ENCODE measurements at regions of chr11 and their contacts with region 1.

Region 1: DNA sequence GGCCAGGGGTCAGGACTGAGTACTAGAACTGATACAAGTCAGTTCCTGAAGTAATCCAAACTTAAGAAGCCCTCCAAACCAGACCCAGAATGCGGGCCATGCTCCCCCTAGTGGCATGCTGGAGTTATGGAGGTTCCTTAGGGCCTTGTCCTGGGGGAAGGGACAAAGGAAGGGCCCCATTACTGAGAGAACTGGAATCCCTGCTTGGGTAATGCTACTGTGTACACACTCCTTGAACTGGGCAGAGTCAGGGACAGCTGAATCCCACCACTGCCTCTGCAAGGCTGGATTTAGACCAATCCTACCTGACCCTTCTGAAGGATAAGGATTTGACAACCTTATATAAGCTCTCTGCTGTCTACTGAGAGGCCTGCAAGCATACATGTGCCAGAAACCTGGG is 97.3 kb upstream of the AKIP1 start:
- DNase-seq: peak; percentile 69 to 84 (median 74)
- ATAC-seq: peak in 3 of 4 donors; percentile 41 to 64 (median 55)
- H3K4me3 ChIP-seq: no peak overlapping the region
- H3K27ac ChIP-seq: peak overlapping the region in 8 of 12 donors; percentile 4 to 89 (median 37)
- H3K4me1 ChIP-seq: peaks cover 0 to 48% (median 26%) of the 10 kb centered on the region in 12 donors
- H3K27me3 ChIP-seq: no peaks in the 10 kb centered on the region
- CTCF ChIP-seq: peak; percentile 83 to 93 (median 85)
- POLR2A ChIP-seq: no peak

Region 2: DNA sequence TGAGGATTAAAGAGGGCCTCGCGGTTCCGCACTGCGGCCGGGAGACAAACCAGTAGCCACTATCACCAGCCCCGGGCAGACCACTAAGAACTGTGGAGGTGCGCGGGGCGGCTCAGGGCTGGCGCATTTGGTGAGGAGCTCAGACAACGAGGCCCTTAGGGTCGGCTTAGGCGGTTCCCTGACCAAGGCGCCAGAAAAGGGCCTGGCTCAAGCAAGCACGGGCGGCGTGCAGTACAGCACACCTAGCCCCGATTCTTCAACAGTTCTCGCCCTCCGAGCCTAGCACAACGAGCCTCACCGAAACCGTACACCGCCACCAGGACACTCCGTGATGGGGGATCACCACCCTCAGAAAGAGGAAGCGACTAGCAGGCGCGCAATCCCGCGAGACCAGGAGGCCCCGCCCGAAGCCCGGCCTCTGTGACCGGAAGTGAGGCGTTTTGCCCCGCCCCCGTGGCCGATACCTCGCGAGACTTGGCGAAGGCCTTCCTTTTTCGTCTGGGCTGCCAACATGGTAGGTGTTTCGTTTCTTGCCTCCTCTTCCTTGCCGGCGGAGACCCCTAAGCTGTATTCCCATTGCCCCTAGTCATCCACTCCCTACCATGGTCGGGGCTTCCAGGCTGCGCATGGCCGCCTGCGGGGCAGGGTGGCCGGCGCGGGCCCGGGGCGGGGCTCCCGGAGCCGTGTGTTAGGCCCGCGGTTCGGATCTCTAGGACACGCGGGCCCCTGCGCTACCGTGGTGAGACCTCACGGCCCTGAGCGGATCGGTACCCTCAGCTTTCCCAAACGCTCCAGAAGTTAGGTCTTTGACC is 131.1 kb before region 1 on chr11 and contains the starts of genes RPL27A and TRIM66:
- intact Hi-C with region 1: loop called in 7 of 10 experiments (anchors 2 to 5 kb)
- DNase-seq: peak; percentile 99
- ATAC-seq: peak; percentile 97 to 99 (median 98)
- H3K4me3 ChIP-seq: peak within 1 kb of the TSS; percentile 58 to 100 (median 90)
- H3K27ac ChIP-seq: peak within 1 kb of the TSS; percentile 91 to 98 (median 96)
- H3K4me1 ChIP-seq: peaks cover 0 to 34% (median 22%) of the 10 kb centered on the region in 12 donors
- H3K27me3 ChIP-seq: no peaks in the 10 kb centered on the region
- CTCF ChIP-seq: peak in 6 of 12 donors; percentile 7 to 26 (median 13)
- POLR2A ChIP-seq: peak; percentile 51 to 97
- total RNA-seq, gene RPL27A: 299 to 597 (median 438) TPM
- total RNA-seq, gene TRIM66: 0.71 to 10.1 (median 4.1) TPM

Region 3: DNA sequence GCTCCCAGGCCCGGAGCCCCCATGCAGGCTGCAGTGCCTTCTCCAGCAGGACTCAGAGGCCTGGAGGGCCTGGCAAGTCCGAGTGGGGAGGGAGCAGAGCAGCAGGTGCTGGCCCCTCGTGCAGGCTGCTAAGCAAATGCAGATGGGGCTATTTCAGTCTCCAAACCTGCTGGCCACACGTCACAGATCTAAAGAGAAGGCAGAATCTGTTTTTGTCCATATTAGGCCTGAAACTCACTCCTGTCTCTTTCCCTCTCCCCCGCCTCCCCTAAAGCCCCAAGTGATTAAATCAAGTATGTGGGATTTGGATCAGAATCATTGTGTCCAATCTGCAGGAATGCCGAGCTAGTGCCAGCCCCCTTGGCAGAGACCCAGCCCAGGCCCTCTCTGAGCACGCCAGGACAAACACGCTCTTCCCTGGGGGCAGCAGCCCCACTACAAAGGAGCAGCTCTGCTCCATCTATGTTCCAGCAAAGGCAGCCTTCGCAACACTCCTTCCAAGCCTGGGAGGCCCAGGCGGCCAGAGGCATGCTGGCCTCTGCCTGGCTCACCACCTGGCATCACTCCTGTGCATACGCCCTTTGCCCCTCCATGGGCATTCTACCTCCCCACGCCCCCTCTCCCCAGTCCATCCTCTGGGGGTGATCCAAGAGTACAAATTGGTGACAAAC is 104.5 kb before region 1 on chr11:
- intact Hi-C with region 1: loop called in 3 of 10 experiments (anchors 5 to 10 kb)
- DNase-seq: peak; percentile 82 to 92 (median 91)
- ATAC-seq: peak; percentile 46 to 80 (median 70)
- H3K4me3 ChIP-seq: no peak overlapping the region
- H3K27ac ChIP-seq: peak overlapping the region; percentile 61 to 95 (median 79)
- H3K4me1 ChIP-seq: peaks cover 14 to 45% (median 35%) of the 10 kb centered on the region in 12 donors
- H3K27me3 ChIP-seq: no peaks in the 10 kb centered on the region
- CTCF ChIP-seq: no peak
- POLR2A ChIP-seq: no peak

Region 4: DNA sequence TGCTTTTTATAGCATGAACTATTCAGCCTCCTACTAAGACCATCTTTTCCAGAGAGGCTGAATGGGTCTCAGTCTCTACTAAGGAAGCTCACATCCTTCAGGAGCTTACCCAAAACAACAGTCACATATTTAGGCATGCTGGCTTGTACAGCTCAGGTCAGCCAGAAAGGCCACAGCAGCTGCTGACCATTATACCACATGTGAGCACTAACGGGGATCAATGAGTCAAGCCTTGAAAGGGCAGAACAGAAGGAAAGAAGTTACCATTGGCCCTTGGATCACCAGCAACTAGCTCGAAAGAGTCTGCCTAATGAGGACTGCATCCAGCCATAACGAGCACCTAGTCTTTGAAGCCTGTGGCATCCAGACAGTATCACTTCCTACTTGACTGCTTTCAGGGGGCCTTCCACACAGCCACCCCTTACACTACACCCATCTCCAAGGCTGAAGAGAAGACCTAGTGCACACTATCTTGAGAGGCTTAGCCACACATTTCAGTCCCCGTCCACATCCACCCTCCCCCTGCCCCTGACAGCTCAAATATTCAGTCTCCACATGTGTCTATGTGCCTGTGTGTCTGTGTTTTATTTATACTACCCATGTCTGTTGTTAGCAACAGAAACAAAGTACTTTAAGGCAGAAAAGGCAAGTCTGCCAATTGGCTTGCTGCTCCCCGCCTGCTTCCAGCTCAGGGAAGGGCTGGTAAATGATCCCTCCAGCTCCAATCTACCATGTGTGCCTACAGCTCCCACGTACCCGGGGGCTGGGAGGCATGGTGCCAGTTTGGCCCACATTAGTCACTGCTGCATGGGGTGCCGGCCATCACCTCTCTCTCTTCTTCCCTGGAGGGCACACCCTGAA is 35.5 kb before region 1 on chr11:
- intact Hi-C with region 1: loop called in 2 of 10 experiments (anchors 5 kb)
- DNase-seq: peak; percentile 47 to 79 (median 74)
- ATAC-seq: peak; percentile 86 to 91 (median 88)
- H3K4me3 ChIP-seq: no peak overlapping the region
- H3K27ac ChIP-seq: peak overlapping the region; percentile 41 to 86 (median 68)
- H3K4me1 ChIP-seq: peaks cover 0 to 90% (median 60%) of the 10 kb centered on the region in 12 donors
- H3K27me3 ChIP-seq: no peaks in the 10 kb centered on the region
- CTCF ChIP-seq: no peak
- POLR2A ChIP-seq: no peak

Region 5: DNA sequence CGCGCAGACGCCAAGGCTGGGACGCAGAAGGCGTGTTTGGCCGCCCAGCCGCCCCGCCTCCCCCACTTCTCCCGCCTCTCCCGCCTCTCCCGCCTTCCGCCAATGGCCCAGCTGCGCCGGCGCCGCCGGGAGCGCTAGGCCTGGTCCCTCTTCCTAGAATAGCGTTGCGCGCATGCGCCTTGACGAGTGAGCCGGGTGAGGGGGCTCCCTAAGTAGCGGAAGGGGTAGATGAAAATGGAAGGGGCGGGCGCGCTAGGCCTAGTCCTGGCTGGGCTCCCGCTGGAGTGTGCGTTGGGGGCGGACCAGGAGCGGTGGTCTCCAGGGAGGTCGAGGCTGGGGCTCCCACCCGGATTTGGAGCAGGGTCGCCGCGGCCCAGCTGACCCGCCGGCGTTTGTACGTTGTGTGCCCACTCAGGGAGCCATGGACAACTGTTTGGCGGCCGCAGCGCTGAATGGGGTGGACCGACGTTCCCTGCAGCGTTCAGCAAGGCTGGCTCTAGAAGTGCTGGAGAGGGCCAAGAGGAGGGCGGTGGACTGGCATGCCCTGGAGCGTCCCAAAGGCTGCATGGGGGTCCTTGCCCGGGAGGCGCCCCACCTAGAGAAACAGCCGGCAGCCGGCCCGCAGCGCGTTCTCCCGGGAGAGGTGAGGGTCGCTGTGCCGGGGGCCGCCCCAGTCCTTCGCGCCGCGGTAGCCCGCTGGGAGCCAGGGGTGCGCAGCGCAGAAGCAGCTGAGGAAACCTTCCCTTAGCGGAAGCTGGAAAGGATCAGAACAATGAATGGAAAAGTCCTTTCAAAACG is 97.6 kb after region 1 on chr11 and contains the start of gene AKIP1:
- intact Hi-C with region 1: loop called in 3 of 10 experiments (anchors 5 to 10 kb)
- DNase-seq: peak; percentile 97 to 98 (median 98)
- ATAC-seq: peak; percentile 94 to 97 (median 96)
- H3K4me3 ChIP-seq: peak within 1 kb of the TSS; percentile 40 to 96 (median 85)
- H3K27ac ChIP-seq: peak within 1 kb of the TSS; percentile 80 to 98 (median 94)
- H3K4me1 ChIP-seq: peaks cover 0 to 52% (median 25%) of the 10 kb centered on the region in 12 donors
- H3K27me3 ChIP-seq: no peaks in the 10 kb centered on the region
- CTCF ChIP-seq: no peak
- POLR2A ChIP-seq: peak in 1 of 2 donors; percentile 74
- total RNA-seq, gene AKIP1: 21.6 to 39.9 (median 27.4) TPM

Region 6: DNA sequence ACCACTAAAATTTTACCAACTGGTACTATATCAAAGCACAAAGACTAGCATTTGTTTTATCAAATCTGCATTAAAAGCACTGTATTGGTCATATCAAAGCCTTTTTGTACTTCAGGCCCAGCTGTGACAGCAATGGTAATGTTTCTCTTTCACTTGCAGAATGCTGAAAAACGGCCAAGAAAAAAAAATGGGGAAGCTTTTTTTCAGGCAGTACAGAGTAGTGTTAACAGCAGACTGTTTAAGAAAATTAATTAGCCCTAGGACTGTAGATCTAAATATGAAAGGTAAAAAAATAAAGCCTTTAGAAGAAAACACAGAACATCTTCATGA is 418.2 kb after region 1 on chr11:
- intact Hi-C with region 1: no loop called
- DNase-seq: no peak
- ATAC-seq: peak; percentile 56 to 75 (median 60)
- H3K4me3 ChIP-seq: peak overlapping the region in 9 of 12 donors; percentile 27 to 51 (median 39)
- H3K27ac ChIP-seq: peak overlapping the region; percentile 10 to 86 (median 60)
- H3K4me1 ChIP-seq: peaks cover 0 to 52% (median 46%) of the 10 kb centered on the region in 12 donors
- H3K27me3 ChIP-seq: no peaks in the 10 kb centered on the region
- CTCF ChIP-seq: no peak
- POLR2A ChIP-seq: no peak